AG04450 (cell line): ENCODE measurements at regions of chr4 and their contacts with region 1.

Region 1: GRCh38 chr4:11765849-11766453 is 337.3 kb upstream of the HS3ST1 start:
- DNase-seq: no peak
- H3K4me3 ChIP-seq: no peak overlapping the region
- H3K27ac ChIP-seq: no peak overlapping the region
- H3K27me3 ChIP-seq: no peaks in the 10 kb centered on the region
- CTCF ChIP-seq: peak; percentile 86

Region 2: GRCh38 chr4:11166606-11167005 is 599.3 kb before region 1 on chr4:
- CTCF ChIA-PET with region 1: no interaction called
- POLR2A ChIA-PET with region 1: no interaction called
- DNase-seq: no peak
- H3K4me3 ChIP-seq: no peak overlapping the region
- H3K27ac ChIP-seq: no peak overlapping the region
- H3K27me3 ChIP-seq: no peaks in the 10 kb centered on the region
- CTCF ChIP-seq: no peak

Region 3: GRCh38 chr4:11514779-11515419 is 251.1 kb before region 1 on chr4:
- CTCF ChIA-PET with region 1: no interaction called
- POLR2A ChIA-PET with region 1: no interaction called
- DNase-seq: no peak
- H3K4me3 ChIP-seq: no peak overlapping the region
- H3K27ac ChIP-seq: no peak overlapping the region
- H3K27me3 ChIP-seq: no peaks in the 10 kb centered on the region
- CTCF ChIP-seq: no peak

Region 4: GRCh38 chr4:11748164-11748872 is 17.6 kb before region 1 on chr4:
- CTCF ChIA-PET with region 1: interaction called, 11 read pairs
- POLR2A ChIA-PET with region 1: interaction called, 3 read pairs
- DNase-seq: peak; percentile 59
- H3K4me3 ChIP-seq: no peak overlapping the region
- H3K27ac ChIP-seq: no peak overlapping the region
- H3K27me3 ChIP-seq: no peaks in the 10 kb centered on the region
- CTCF ChIP-seq: no peak